CD4-positive, alpha-beta memory T cell (primary cell): ENCODE measurements at regions of chr11 and their contacts with region 1.

Region 1: DNA sequence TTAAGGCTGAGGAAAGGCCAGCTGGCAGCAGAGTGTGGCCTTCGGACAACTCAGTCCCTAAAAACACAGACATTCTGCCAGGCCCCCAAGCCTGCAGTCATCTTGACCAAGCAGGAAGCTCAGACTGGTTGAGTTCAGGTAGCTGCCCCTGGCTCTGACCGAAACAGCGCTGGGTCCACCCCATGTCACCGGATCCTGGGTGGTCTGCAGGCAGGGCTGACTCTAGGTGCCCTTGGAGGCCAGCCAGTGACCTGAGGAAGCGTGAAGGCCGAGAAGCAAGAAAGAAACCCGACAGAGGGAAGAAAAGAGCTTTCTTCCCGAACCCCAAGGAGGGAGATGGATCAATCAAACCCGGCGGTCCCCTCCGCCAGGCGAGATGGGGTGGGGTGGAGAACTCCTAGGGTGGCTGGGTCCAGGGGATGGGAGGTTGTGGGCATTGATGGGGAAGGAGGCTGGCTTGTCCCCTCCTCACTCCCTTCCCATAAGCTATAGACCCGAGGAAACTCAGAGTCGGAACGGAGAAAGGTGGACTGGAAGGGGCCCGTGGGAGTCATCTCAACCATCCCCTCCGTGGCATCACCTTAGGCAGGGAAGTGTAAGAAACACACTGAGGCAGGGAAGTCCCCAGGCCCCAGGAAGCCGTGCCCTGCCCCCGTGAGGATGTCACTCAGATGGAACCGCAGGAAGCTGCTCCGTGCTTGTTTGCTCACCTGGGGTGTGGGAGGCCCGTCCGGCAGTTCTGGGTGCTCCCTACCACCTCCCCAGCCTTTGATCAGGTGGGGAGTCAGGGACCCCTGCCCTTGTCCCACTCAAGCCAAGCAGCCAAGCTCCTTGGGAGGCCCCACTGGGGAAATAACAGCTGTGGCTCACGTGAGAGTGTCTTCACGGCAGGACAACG is 11.7 kb downstream of the CXCR5 start:
- DNase-seq: peak; percentile 80 to 91 (median 82)
- H3K4me3 ChIP-seq: peak overlapping the region; percentile 17 to 37
- H3K4me3 Mint-ChIP-seq: peak overlapping the region; percentile 68 to 87 (median 76)
- H3K27ac ChIP-seq: peak overlapping the region; percentile 84
- H3K27ac Mint-ChIP-seq: peak overlapping the region; percentile 93 to 98 (median 97)
- H3K4me1 ChIP-seq: peaks cover 83% of the 10 kb centered on the region
- H3K4me1 Mint-ChIP-seq: peaks cover 58 to 82% (median 70%) of the 10 kb centered on the region in 4 donors
- H3K27me3 ChIP-seq: no peaks in the 10 kb centered on the region
- H3K27me3 Mint-ChIP-seq: no peaks in the 10 kb centered on the region

Region 2: DNA sequence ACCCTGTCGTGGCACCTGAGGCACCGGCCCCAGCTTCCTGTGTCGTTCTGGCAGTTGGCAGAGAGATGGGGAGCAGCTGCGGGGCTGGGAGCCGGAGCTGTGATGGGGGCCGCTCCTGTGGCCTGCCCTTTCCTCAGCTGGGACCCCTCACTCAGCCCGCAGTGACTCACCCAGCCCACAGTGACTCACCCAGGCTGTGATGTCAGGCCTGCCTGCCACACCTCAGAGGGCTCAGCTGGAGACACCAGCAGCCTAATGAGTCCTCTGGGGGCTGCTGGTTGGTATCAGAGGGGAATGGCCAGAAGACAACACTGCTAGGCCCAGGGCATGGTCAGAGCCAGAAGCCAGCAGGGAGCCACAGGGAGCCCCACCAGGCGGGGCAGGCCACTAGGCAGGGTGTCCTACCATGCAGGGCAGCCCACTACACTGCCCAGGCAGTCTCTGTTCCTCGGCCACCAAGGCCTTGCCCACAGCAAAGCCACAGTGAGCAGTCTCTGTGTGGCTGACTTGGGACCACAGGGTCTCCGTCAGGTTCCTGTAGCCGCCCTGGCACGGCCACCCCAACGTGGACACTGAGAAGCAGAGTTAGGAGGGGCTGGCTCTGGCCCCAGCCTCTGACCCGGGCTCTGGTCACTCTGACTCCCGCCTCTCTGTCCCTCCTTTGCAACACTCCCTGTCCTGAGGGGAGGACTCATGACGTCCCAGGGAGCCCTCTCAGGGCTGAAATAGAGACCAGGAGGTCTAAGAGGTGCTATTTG is 1066.6 kb before region 1 on chr11:
- CTCF ChIA-PET with region 1: no interaction called
- POLR2A ChIA-PET with region 1: no interaction called
- intact Hi-C with region 1: no loop called
- DNase-seq: peak; percentile 49 to 91 (median 59)
- H3K4me3 ChIP-seq: no peak overlapping the region
- H3K4me3 Mint-ChIP-seq: peak overlapping the region in 4 of 8 donors; percentile 24 to 65 (median 44)
- H3K27ac ChIP-seq: peak overlapping the region; percentile 44
- H3K27ac Mint-ChIP-seq: peak overlapping the region; percentile 65 to 87 (median 79)
- H3K4me1 ChIP-seq: peaks cover 40% of the 10 kb centered on the region
- H3K4me1 Mint-ChIP-seq: peaks cover 19 to 69% (median 40%) of the 10 kb centered on the region in 4 donors
- H3K27me3 ChIP-seq: no peaks in the 10 kb centered on the region
- H3K27me3 Mint-ChIP-seq: no peaks in the 10 kb centered on the region

Region 3: GRCh38 chr11:118746988-118747585 is 148.3 kb before region 1 on chr11:
- CTCF ChIA-PET with region 1: no interaction called
- POLR2A ChIA-PET with region 1: no interaction called
- intact Hi-C with region 1: no loop called
- DNase-seq: no peak
- H3K4me3 ChIP-seq: no peak overlapping the region
- H3K4me3 Mint-ChIP-seq: no peak overlapping the region
- H3K27ac ChIP-seq: no peak overlapping the region
- H3K27ac Mint-ChIP-seq: peak overlapping the region in 4 of 7 donors; percentile 10 to 72 (median 42)
- H3K4me1 ChIP-seq: peaks cover 6% of the 10 kb centered on the region
- H3K4me1 Mint-ChIP-seq: peaks cover 7 to 10% (median 7%) of the 10 kb centered on the region in 4 donors
- H3K27me3 ChIP-seq: no peaks in the 10 kb centered on the region
- H3K27me3 Mint-ChIP-seq: no peaks in the 10 kb centered on the region

Region 4: GRCh38 chr11:118841469-118842242 is 53.7 kb before region 1 on chr11:
- CTCF ChIA-PET with region 1: interaction called, 3 read pairs
- POLR2A ChIA-PET with region 1: interaction called, 3 read pairs
- intact Hi-C with region 1: loop called (anchors 2 kb)
- DNase-seq: peak; percentile 50 to 77 (median 56)
- H3K4me3 ChIP-seq: peak overlapping the region; percentile 30 to 49
- H3K4me3 Mint-ChIP-seq: peak overlapping the region; percentile 82 to 89 (median 86)
- H3K27ac ChIP-seq: peak overlapping the region; percentile 57
- H3K27ac Mint-ChIP-seq: peak overlapping the region; percentile 59 to 93 (median 92)
- H3K4me1 ChIP-seq: peaks cover 7% of the 10 kb centered on the region
- H3K4me1 Mint-ChIP-seq: peaks cover 7 to 17% (median 15%) of the 10 kb centered on the region in 4 donors
- H3K27me3 ChIP-seq: no peaks in the 10 kb centered on the region
- H3K27me3 Mint-ChIP-seq: no peaks in the 10 kb centered on the region

Region 5: DNA sequence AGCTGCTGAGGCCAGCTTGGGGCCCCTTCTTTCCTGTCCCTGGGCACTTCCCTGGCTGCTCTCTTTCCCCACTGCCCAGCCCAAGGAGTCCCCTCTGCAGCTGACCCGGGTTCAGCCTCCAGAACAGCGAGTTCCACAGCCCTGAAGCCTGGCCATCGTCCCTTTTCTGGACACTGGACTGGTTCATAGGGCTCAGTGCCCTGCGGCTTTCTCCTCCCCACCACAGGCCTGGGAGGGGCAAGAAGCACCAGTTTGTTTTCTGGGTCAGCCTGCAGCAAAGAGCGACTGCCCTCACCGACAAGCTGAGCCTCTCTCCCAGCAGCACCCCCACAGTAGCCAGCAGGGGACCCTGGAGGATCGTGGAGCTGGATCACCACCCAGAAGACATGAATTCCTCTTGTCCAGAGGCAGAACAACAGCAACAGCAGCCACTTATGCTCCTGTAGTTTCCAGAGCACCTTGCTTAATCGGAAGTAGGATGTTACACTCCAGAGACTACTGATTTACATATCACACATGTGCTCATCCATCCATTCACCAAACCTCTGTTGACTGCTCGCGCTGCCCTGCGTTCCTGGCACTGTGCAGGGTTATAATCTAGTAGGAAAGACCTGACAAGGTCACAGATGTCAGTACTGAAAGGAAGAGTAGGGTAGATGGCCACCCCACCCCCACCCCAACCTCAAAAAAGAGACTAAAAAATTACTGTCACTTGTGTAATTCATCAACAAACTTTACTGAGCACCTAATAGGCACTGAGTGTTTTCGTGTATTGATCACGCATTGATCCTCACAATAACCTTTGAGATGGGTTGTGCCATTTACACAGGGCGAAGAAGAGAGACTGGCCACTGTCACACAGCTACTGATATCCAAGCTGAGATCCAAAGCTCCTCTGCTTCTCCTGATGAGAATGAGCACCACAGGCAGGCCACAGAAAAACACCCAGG is 24.7 kb before region 1 on chr11:
- CTCF ChIA-PET with region 1: interaction called, 41 read pairs
- POLR2A ChIA-PET with region 1: interaction called, 398 read pairs
- intact Hi-C with region 1: loop called (anchors 1 kb)
- DNase-seq: peak in 2 of 5 donors; percentile 50 to 60
- H3K4me3 ChIP-seq: peak overlapping the region in 1 of 2 donors; percentile 33
- H3K4me3 Mint-ChIP-seq: peak overlapping the region; percentile 80 to 89 (median 83)
- H3K27ac ChIP-seq: peak overlapping the region; percentile 82
- H3K27ac Mint-ChIP-seq: peak overlapping the region; percentile 96 to 100 (median 99)
- H3K4me1 ChIP-seq: peaks cover 66% of the 10 kb centered on the region
- H3K4me1 Mint-ChIP-seq: peaks cover 41 to 62% (median 49%) of the 10 kb centered on the region in 4 donors
- H3K27me3 ChIP-seq: no peaks in the 10 kb centered on the region
- H3K27me3 Mint-ChIP-seq: no peaks in the 10 kb centered on the region

Region 6: DNA sequence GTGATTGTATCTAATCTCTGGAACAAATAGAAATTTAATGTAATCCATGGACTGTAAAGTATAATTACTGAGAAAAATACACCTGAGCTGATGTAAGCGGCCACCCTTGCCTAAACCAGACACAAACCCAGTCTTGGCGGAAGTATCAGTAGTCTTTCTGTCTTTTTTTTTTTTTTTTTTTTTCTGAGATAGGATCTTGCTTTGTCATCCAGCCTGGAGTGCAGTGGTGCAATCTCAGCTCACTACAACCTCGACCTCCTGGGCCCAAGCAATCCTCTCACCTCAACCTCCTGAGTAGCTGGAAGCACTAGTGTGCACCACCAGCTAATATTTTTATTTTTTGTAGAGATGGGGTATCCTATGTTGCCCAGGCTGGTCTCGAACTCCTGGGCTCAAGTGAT is 17.2 kb before region 1 on chr11:
- CTCF ChIA-PET with region 1: interaction called, 41 read pairs
- POLR2A ChIA-PET with region 1: interaction called, 398 read pairs
- intact Hi-C with region 1: loop called (anchors 1 kb)
- DNase-seq: peak; percentile 46 to 64 (median 51)
- H3K4me3 ChIP-seq: no peak overlapping the region
- H3K4me3 Mint-ChIP-seq: peak overlapping the region in 7 of 8 donors; percentile 17 to 90 (median 59)
- H3K27ac ChIP-seq: peak overlapping the region; percentile 69
- H3K27ac Mint-ChIP-seq: peak overlapping the region; percentile 95 to 99 (median 98)
- H3K4me1 ChIP-seq: peaks cover 94% of the 10 kb centered on the region
- H3K4me1 Mint-ChIP-seq: peaks cover 71 to 97% (median 83%) of the 10 kb centered on the region in 4 donors
- H3K27me3 ChIP-seq: no peaks in the 10 kb centered on the region
- H3K27me3 Mint-ChIP-seq: no peaks in the 10 kb centered on the region

Region 7: GRCh38 chr11:118883368-118884071 is 11.9 kb before region 1 on chr11 and contains the start of gene CXCR5:
- CTCF ChIA-PET with region 1: interaction called, 16 read pairs
- POLR2A ChIA-PET with region 1: interaction called, 398 read pairs
- intact Hi-C with region 1: no loop called
- DNase-seq: peak; percentile 44 to 73 (median 51)
- H3K4me3 ChIP-seq: peak within 1 kb of the TSS; percentile 34 to 51
- H3K4me3 Mint-ChIP-seq: peak within 1 kb of the TSS; percentile 76 to 91 (median 87)
- H3K27ac ChIP-seq: peak within 1 kb of the TSS; percentile 64
- H3K27ac Mint-ChIP-seq: peak within 1 kb of the TSS; percentile 91 to 97 (median 94)
- H3K4me1 ChIP-seq: peaks cover 70% of the 10 kb centered on the region
- H3K4me1 Mint-ChIP-seq: peaks cover 46 to 87% (median 60%) of the 10 kb centered on the region in 4 donors
- H3K27me3 ChIP-seq: no peaks in the 10 kb centered on the region
- H3K27me3 Mint-ChIP-seq: no peaks in the 10 kb centered on the region
- total RNA-seq, gene CXCR5: 21.1 to 21.5 TPM

Region 8: GRCh38 chr11:118907051-118908042 is 12.0 kb after region 1 on chr11:
- CTCF ChIA-PET with region 1: interaction called, 18 read pairs
- POLR2A ChIA-PET with region 1: interaction called, 6 read pairs
- intact Hi-C with region 1: no loop called
- DNase-seq: peak; percentile 80 to 86 (median 83)
- H3K4me3 ChIP-seq: no peak overlapping the region
- H3K4me3 Mint-ChIP-seq: peak overlapping the region in 6 of 8 donors; percentile 0 to 85 (median 54)
- H3K27ac ChIP-seq: peak overlapping the region; percentile 40
- H3K27ac Mint-ChIP-seq: peak overlapping the region; percentile 91 to 96 (median 95)
- H3K4me1 ChIP-seq: peaks cover 55% of the 10 kb centered on the region
- H3K4me1 Mint-ChIP-seq: peaks cover 32 to 51% (median 42%) of the 10 kb centered on the region in 4 donors
- H3K27me3 ChIP-seq: no peaks in the 10 kb centered on the region
- H3K27me3 Mint-ChIP-seq: no peaks in the 10 kb centered on the region

Region 9: DNA sequence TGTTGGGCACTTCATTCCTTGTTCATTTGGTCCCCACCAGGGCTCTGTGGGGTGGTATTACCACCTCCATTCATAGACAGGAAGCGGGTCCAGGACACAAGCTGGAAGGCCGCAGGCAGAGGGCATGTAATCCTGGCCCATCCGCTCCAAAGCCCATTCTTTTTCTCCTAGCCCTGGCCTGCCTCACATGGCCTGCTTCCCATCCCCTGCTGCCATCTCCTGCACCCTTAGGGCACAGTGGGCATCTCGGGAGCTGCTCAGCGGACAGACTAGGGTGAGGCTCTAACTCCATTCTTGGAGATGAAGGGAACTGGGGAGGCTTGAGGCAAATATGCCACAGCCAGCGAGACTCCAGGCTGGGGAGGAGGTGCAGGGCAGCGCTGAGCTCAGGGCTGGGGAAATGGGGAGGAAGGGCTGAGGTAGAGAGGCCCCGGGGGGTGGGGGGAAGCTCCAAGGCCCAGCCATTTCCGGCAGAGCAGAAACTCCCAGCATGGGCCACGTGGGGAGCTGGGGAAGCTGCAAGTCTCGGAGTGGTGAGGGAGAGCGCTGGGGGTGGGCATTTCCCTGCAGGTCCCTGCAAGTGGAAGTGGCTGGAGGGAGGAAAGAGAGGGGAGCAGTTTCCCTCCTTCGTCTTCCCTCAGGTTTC is 44.7 kb after region 1 on chr11:
- CTCF ChIA-PET with region 1: no interaction called
- POLR2A ChIA-PET with region 1: no interaction called
- intact Hi-C with region 1: no loop called
- DNase-seq: peak in 4 of 5 donors; percentile 37 to 71 (median 44)
- H3K4me3 ChIP-seq: peak overlapping the region in 1 of 2 donors; percentile 6
- H3K4me3 Mint-ChIP-seq: peak overlapping the region in 6 of 8 donors; percentile 9 to 62 (median 53)
- H3K27ac ChIP-seq: peak overlapping the region; percentile 6
- H3K27ac Mint-ChIP-seq: peak overlapping the region in 3 of 7 donors; percentile 43 to 53 (median 52)
- H3K4me1 ChIP-seq: peaks cover 18% of the 10 kb centered on the region
- H3K4me1 Mint-ChIP-seq: peaks cover 22 to 47% (median 32%) of the 10 kb centered on the region in 4 donors
- H3K27me3 ChIP-seq: no peaks in the 10 kb centered on the region
- H3K27me3 Mint-ChIP-seq: peaks cover 0 to 1% of the 10 kb centered on the region in 2 donors

Region 10: DNA sequence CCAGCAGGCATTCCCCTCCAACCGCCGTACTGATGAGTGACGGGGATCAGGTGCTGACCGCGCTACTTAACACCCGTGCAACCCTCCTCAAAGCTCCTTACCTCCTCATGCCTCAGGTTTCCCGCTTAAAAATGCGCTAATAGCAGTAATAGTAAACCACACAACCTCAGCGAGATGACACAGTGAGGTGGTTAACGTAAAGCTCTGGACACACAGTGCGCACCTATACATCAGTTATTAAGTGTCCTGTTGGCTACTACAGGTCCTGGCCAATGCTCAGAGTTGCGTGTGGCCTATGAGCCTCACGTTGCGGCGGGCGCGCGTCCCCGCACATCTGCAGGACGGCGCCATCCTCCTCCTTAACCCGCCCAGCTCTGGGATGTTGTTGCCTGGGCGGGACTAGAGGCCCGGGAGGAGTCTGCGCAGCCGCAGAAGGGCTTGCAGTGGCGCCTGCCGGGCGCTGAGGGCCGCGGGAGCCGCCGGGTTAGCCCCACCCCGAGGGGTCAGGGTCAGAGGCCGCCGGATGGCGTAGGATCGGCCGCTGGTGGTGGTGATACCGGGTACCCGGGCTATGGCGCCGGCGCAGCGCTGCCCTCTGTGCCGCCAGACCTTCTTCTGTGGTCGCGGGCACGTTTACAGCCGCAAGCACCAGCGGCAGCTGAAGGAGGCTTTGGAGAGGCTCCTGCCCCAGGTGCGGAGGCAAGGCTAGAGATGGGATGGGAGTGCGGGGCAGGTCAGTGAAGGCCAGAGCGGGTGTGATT is 102.4 kb after region 1 on chr11 and contains the start of gene CENATAC:
- CTCF ChIA-PET with region 1: no interaction called
- POLR2A ChIA-PET with region 1: no interaction called
- intact Hi-C with region 1: no loop called
- DNase-seq: peak; percentile 94 to 96 (median 95)
- H3K4me3 ChIP-seq: peak within 1 kb of the TSS; percentile 87 to 99
- H3K4me3 Mint-ChIP-seq: peak within 1 kb of the TSS; percentile 87 to 99 (median 98)
- H3K27ac ChIP-seq: peak within 1 kb of the TSS; percentile 75
- H3K27ac Mint-ChIP-seq: peak within 1 kb of the TSS; percentile 90 to 99 (median 95)
- H3K4me1 ChIP-seq: peaks cover 24% of the 10 kb centered on the region
- H3K4me1 Mint-ChIP-seq: peaks cover 18 to 52% (median 34%) of the 10 kb centered on the region in 4 donors
- H3K27me3 ChIP-seq: no peaks in the 10 kb centered on the region
- H3K27me3 Mint-ChIP-seq: no peaks in the 10 kb centered on the region
- total RNA-seq, gene CENATAC: 109 to 114 TPM